AG04450 (cell line): ENCODE measurements at regions of chr12 and their contacts with region 1.

Region 1: DNA sequence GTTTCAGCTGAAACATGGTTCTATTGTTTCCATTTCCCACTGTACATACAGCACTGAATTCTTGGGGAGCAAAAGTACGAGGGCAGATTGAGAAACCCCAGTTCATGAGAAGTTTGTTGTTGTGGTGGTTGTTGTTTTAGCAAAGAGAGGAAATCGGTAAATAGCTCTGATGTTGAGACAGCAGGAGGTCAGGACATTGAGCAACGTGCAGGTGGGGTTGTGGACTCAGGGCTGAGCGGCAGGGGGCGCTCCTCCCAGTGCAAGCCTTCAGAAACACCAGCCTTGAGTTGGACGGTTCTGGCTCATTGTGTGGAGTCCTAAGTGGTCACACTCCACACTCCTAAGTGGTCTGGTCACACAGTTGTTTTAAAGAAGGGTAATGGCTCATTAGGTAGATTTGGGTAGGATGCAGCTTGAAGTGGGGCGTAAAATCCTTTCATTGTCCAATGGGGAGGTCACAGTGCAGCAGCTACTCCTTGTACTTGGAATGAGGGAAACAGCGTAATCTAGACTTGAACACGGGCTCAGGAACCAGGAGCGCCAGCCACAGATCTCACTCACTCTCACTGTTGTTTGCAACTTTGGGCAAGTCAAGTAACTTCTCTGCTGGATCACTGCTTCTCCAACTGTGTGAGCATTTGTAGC is 14.5 kb upstream of the PWP1 start:
- DNase-seq: no peak
- H3K4me3 ChIP-seq: no peak overlapping the region
- H3K27ac ChIP-seq: no peak overlapping the region
- H3K27me3 ChIP-seq: peaks cover 40% of the 10 kb centered on the region
- CTCF ChIP-seq: peak; percentile 53

Region 2: DNA sequence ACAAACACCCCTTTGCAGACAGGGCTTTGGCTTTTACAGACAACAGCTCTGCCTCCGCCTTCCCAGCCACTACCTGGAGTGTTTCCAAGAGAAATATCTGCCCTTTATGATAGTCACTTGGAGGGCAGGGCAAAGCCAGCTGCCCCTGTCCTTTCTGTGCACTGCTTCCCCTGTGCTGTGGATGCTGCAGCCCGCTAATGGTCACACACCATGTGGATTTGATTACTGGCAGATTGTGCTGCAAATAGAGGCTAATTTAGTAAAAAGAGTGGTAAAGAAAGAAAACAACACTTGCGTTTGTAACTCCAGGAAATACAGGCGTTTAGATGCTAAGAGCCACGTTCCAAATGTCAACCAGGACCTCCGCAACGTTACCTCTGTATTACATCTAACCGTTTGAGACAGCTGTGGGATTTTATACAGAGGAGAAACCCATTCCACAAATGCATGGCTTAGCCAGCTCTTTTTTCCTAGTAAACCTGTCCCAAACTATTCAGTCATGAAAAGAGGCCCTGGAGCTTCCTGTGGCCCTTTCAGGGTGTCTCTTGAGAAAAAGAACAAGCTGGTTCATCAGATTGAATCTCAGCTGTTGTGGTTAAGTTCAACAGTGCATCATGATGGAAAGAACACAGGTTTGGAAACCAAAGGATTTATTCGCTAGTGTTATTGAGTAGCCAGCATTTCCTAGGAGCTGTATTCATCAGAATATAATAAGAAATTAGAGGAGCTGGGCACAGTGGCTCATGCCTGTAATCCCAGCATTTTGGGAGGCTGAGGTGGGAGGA is 15.6 kb before region 1 on chr12:
- CTCF ChIA-PET with region 1: interaction called, 17 read pairs
- POLR2A ChIA-PET with region 1: no interaction called
- DNase-seq: no peak
- H3K4me3 ChIP-seq: no peak overlapping the region
- H3K27ac ChIP-seq: no peak overlapping the region
- H3K27me3 ChIP-seq: no peaks in the 10 kb centered on the region
- CTCF ChIP-seq: no peak

Region 3: DNA sequence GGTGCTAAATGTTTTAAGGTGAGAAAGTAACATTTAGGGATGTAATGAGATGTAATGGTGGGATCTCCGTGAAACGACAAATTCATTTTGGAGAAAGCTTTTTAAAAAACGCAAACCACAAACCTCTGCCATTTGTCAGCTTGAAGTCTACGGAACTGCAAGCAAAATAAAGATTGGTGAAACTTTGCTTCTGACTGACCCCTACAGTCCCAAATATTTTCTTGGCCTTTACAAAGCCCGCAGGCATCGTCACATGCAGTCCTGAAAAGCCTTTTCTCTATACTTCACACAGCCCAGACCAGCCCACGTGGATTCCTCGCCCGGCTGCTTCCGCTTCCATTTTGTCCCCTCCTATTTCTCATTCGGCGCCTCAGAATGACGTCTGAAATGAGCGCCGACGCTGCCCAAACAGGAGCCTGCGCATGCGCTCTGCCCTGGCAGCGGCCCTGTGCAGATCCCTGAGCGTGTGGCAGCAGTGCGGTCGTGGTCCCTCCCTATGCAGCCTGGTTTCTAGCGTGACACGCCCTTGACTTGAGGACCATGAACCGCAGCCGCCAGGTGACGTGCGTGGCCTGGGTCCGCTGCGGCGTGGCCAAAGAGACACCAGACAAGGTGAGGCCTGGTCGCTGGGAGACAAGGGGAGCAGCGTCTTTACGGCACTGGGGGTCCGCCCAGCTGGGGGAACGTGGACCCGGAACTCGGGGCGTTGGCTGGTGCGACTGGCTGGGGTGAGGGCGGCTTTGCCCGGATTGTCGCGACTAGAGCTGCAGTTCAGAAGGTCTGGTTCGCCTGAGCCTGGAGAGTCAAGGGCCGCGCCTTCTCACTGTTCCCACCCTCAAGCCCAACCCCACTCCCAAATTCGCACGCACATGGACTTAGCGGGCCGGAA is 14.5 kb after region 1 on chr12 and contains the start of gene PWP1:
- CTCF ChIA-PET with region 1: interaction called, 17 read pairs
- POLR2A ChIA-PET with region 1: no interaction called
- DNase-seq: peak; percentile 84
- H3K4me3 ChIP-seq: peak within 1 kb of the TSS; percentile 98
- H3K27ac ChIP-seq: peak within 1 kb of the TSS; percentile 47
- H3K27me3 ChIP-seq: no peaks in the 10 kb centered on the region
- CTCF ChIP-seq: no peak
- polyA plus RNA-seq, gene PWP1: 85.4 and 115 TPM in 2 replicates

Region 4: DNA sequence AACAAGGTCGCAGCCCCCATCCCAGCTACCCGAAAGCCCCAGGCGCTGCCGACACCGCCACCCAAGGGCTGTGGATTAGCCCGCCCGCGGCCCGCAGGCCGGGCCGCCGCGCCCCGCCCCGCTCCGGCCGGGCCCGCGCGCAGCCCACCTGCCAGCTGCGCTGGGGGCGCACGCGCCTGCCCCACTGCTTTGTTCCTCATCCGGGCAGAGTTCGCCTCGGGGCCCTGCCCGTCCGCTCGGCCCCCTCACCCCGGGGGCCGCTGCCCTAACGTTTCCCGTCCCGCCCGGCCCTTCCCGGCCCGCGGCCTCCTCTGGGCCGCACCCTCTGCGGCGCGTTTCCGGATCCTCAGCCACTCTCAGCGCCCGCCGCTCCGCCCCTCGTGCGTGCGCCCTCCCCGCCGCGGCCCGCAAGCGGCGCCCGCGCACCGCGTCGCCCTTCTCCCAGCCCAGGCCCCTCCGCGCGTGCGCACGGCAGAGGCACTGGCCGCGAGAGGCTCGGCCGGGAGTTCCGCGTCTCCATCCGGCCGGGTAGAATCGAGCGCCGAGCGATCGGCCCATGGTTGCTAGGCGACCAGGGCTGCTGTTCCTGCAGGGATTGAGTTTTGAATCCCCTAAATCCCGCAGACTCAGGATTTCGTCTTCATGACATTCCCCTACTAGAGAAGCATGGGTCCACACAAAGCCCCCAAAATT is 89.8 kb after region 1 on chr12 and contains the start of gene PRDM4:
- CTCF ChIA-PET with region 1: interaction called, 11 read pairs
- POLR2A ChIA-PET with region 1: no interaction called
- DNase-seq: peak; percentile 82
- H3K4me3 ChIP-seq: peak within 1 kb of the TSS; percentile 89
- H3K27ac ChIP-seq: peak within 1 kb of the TSS; percentile 40
- H3K27me3 ChIP-seq: no peaks in the 10 kb centered on the region
- CTCF ChIP-seq: no peak
- polyA plus RNA-seq, gene PRDM4: 27.9 and 30.5 TPM in 2 replicates

Region 5: GRCh38 chr12:107929436-107929835 is 258.3 kb after region 1 on chr12:
- CTCF ChIA-PET with region 1: interaction called, 15 read pairs
- POLR2A ChIA-PET with region 1: no interaction called
- DNase-seq: no peak
- H3K4me3 ChIP-seq: no peak overlapping the region
- H3K27ac ChIP-seq: no peak overlapping the region
- H3K27me3 ChIP-seq: no peaks in the 10 kb centered on the region
- CTCF ChIP-seq: peak; percentile 26